ENCODE measurements at regions of chr10 and their contacts with region 1.

Region 1: DNA sequence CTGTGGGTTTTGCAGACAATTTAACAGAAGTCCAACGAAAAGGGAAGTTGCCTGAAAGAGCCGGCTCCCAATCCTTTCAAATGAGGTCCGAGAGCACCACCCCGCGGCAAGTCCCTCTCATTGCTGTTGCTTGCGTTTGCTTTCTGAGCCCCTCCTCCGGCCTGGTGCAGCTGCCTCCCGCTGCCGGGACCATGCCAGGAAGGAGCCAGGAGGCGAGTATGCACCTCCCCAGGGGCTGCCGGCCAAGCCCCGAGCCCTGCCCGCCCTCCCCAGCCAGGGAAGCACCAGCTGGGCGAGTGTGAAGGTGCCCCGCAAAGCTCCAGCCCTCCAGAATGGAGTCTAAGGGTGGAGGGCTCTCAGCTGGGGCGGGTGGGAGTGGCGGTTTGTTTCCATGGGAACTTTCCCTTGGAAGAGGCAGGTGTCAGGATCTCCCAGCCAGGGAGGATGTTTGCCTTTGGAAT is 25.8 kb upstream of the PPP2R2D start:
- DNase-seq: peak; percentile 62
- ATAC-seq: peak; percentile 69
- H3K4me3 ChIP-seq: no peak overlapping the region
- H3K27ac ChIP-seq: no peak overlapping the region
- H3K4me1 ChIP-seq: peaks cover 13% of the 10 kb centered on the region; the same call in 1 of the 2 replicates
- H3K27me3 ChIP-seq: peaks cover 7 to 59% of the 10 kb centered on the region in 2 experiments
- CTCF ChIP-seq: peak; percentile 88
- EP300 ChIP-seq: no peak
- POLR2A ChIP-seq: no peak
- RAD21 ChIP-seq: peak; percentile 70

Region 2: GRCh38 chr10:130190055-130190736 is 1684.8 kb before region 1 on chr10:
- CTCF ChIA-PET with region 1: no interaction called
- POLR2A ChIA-PET with region 1: no interaction called
- in situ Hi-C with region 1: loop called (anchors 25 kb)
- intact Hi-C with region 1: no loop called
- DNase-seq: peak; percentile 68
- ATAC-seq: peak; percentile 78
- H3K4me3 ChIP-seq: peak overlapping the region in 2 of 3 experiments; percentile 56 to 68; a peak in 4 of 6 replicates
- H3K27ac ChIP-seq: no peak overlapping the region
- H3K4me1 ChIP-seq: no peaks in the 10 kb centered on the region
- H3K27me3 ChIP-seq: no peaks in the 10 kb centered on the region
- CTCF ChIP-seq: peak; percentile 98
- EP300 ChIP-seq: no peak
- POLR2A ChIP-seq: no peak
- RAD21 ChIP-seq: peak; percentile 98

Region 3: GRCh38 chr10:131242007-131242406 is 633.0 kb before region 1 on chr10:
- CTCF ChIA-PET with region 1: interaction called, 4 read pairs
- POLR2A ChIA-PET with region 1: no interaction called
- in situ Hi-C with region 1: loop called (anchors 10 kb)
- intact Hi-C with region 1: no loop called
- DNase-seq: peak; percentile 9
- ATAC-seq: peak; percentile 67
- H3K4me3 ChIP-seq: no peak overlapping the region
- H3K27ac ChIP-seq: no peak overlapping the region
- H3K4me1 ChIP-seq: no peaks in the 10 kb centered on the region
- H3K27me3 ChIP-seq: peaks cover 1 to 28% of the 10 kb centered on the region in 2 experiments; a peak in 3 of 5 replicates
- CTCF ChIP-seq: peak; percentile 62
- EP300 ChIP-seq: no peak
- POLR2A ChIP-seq: no peak
- RAD21 ChIP-seq: no peak

Region 4: GRCh38 chr10:131453594-131454355 is 421.2 kb before region 1 on chr10:
- CTCF ChIA-PET with region 1: interaction called, 6 read pairs
- POLR2A ChIA-PET with region 1: no interaction called
- in situ Hi-C with region 1: no loop called
- intact Hi-C with region 1: loop called (anchors 10 kb)
- DNase-seq: peak; percentile 12
- ATAC-seq: peak; percentile 59; the same call in 2 of the 3 replicates
- H3K4me3 ChIP-seq: no peak overlapping the region
- H3K27ac ChIP-seq: no peak overlapping the region
- H3K4me1 ChIP-seq: no peaks in the 10 kb centered on the region
- H3K27me3 ChIP-seq: peaks cover 0 to 31% of the 10 kb centered on the region in 2 experiments; a peak in 4 of 5 replicates
- CTCF ChIP-seq: peak; percentile 69
- EP300 ChIP-seq: no peak
- POLR2A ChIP-seq: no peak
- RAD21 ChIP-seq: no peak

Region 5: DNA sequence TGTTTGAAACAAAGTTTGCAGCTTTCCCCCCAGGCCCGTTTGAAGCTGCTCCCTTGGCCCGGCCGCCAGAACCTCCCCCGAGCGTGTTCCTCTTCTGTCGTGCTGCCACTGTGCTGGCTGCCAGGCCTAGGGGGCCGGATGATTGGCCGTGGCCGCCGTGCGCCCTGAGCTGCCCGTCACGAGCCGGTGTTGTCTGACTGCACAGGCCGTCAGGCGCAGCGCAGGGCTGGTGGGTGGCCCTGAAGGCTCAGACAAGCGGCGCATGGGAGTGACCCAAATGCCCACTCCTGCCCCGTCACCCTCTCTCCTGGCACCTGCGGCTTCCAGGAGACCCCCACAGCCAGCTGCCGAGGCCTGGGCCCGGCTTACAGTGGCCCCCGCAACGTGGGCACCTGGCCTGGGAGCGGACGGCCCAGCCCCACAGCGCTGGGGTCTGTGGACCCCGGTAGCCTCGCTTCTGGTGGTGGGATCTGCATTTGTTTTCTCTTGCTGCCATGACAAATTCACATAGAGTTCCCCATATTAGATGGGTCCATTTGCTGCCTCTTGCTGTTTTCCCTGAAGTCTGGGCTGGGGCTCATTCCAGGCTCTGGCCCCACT is 203.8 kb after region 1 on chr10:
- CTCF ChIA-PET with region 1: no interaction called
- POLR2A ChIA-PET with region 1: no interaction called
- in situ Hi-C with region 1: no loop called
- intact Hi-C with region 1: no loop called
- DNase-seq: no peak
- ATAC-seq: no peak
- H3K4me3 ChIP-seq: no peak overlapping the region
- H3K27ac ChIP-seq: no peak overlapping the region
- H3K4me1 ChIP-seq: peaks cover 10% of the 10 kb centered on the region
- H3K27me3 ChIP-seq: no peaks in the 10 kb centered on the region; a peak in 2 of 5 replicates
- CTCF ChIP-seq: no peak
- EP300 ChIP-seq: no peak
- POLR2A ChIP-seq: no peak
- RAD21 ChIP-seq: no peak

Measured in HepG2 (cell line).